HEK293T (cell line): ENCODE measurements at regions of chr10 and their contacts with region 1.

Region 1: GRCh38 chr10:13536674-13537366 is 8.0 kb upstream of the BEND7 start:
- DNase-seq: peak; percentile 85

Region 2: DNA sequence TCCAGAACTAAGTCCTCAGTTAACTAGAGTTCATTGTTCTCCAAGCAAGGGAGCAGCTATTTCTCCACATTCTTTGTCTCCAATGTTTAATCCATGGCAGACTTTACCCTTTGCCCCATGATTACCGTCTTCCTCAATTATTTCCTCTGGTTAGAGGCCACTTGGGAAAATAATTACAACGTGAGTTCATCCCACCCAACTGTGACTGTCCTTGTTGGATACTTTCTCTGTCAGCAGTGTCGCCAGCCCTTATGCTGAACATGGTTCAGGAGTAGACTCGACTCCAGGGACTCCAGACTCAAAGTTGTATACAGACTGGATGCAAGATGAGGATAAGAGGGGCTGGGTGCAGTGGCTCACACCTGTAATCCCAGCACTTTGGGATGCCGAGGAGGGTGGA is 171.6 kb before region 1 on chr10:
- CTCF ChIA-PET with region 1: no interaction called
- POLR2A ChIA-PET with region 1: no interaction called
- DNase-seq: no peak

Region 3: DNA sequence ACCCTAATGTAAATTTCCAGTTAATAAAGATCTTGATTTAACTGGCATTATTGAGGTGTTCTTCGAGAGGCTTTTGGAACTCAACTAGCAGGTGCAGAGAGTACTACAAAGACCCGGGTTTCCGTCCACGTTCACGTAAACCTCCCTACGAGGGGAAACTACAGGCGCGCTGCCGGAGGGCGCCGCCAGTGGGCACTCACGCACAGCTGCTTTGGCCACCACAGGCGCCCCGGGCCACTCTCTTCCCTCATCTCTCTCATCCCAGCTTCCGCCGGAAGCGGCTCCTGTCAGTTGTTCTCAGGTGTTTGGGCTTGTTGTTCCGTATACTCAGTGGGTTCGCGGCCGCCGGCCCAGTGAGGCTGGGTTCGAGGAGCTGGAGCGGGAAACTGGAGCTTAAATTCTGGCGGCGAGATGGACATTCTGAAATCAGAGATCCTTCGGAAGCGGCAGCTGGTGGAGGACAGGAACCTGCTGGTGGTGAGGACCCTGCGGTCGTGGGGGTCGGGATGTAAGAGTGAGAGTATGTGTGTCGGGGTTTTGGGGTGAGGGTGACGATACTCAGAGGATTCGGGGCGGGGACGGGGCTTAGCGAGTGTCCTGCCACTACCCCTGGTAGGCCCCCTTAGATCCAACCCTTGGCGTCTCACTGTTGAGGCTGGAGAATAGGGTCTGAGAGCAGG is 50.0 kb after region 1 on chr10 and contains the start of gene PRPF18:
- CTCF ChIA-PET with region 1: interaction called, 3 read pairs
- POLR2A ChIA-PET with region 1: interaction called, 12 read pairs
- DNase-seq: peak; percentile 97